ENCODE measurements at regions of chr12 and their contacts with region 1.

Region 1: DNA sequence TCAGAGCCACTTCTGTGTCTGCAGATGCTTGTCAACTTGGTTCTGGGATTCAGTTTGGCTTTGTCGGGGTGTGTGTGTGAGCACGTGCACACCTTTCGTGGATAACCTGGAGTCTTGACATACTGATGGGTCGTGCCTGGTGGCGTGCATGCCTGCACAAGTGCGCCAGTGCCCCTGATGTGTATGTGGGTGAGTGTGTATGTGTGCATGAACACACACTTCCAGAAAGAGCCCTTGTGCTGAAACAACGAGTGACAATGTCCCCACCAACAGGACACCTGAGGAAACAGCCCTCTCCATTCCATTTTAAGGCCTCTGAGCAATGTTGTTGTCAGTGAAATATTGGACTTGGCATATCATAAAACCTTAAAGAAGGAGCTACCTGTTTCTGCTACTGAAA is 53.9 kb downstream of the SMUG1 start:
- DNase-seq: no peak
- H3K4me3 ChIP-seq: no peak overlapping the region
- H3K27ac ChIP-seq: no peak overlapping the region
- H3K4me1 ChIP-seq: peaks cover 0 to 3% (median 1%) of the 10 kb centered on the region in 4 experiments; a peak in 2 of 7 replicates
- H3K27me3 ChIP-seq: peaks cover 25 to 89% (median 67%) of the 10 kb centered on the region in 4 experiments
- CTCF ChIP-seq: peak in 1 of 3 experiments; percentile 37; a peak in 1 of 4 replicates
- EP300 ChIP-seq: no peak
- POLR2A ChIP-seq: no peak
- RAD21 ChIP-seq: peak; percentile 31 to 50; a peak in 2 of 4 replicates

Region 2: GRCh38 chr12:54059668-54060067 is 75.2 kb before region 1 on chr12:
- CTCF ChIA-PET with region 1: interaction called, 10 read pairs
- POLR2A ChIA-PET with region 1: no interaction called
- DNase-seq: no peak
- H3K4me3 ChIP-seq: no peak overlapping the region
- H3K27ac ChIP-seq: no peak overlapping the region
- H3K4me1 ChIP-seq: peaks cover 4 to 14% (median 7%) of the 10 kb centered on the region in 4 experiments
- H3K27me3 ChIP-seq: peaks cover 83 to 98% (median 95%) of the 10 kb centered on the region in 4 experiments
- CTCF ChIP-seq: no peak
- EP300 ChIP-seq: no peak
- POLR2A ChIP-seq: no peak
- RAD21 ChIP-seq: no peak

Region 3: GRCh38 chr12:54147186-54147585 is 12.3 kb after region 1 on chr12:
- CTCF ChIA-PET with region 1: interaction called, 242 read pairs
- POLR2A ChIA-PET with region 1: interaction called, 3 read pairs
- DNase-seq: no peak
- H3K4me3 ChIP-seq: no peak overlapping the region
- H3K27ac ChIP-seq: no peak overlapping the region
- H3K4me1 ChIP-seq: peaks cover 0 to 4% (median 0%) of the 10 kb centered on the region in 4 experiments; a peak in 2 of 7 replicates
- H3K27me3 ChIP-seq: peaks cover 0 to 12% (median 3%) of the 10 kb centered on the region in 4 experiments; a peak in 3 of 7 replicates
- CTCF ChIP-seq: no peak
- EP300 ChIP-seq: no peak
- POLR2A ChIP-seq: no peak
- RAD21 ChIP-seq: no peak

Region 4: GRCh38 chr12:54164387-54165145 is 29.7 kb after region 1 on chr12:
- CTCF ChIA-PET with region 1: interaction called, 242 read pairs
- POLR2A ChIA-PET with region 1: interaction called, 4 read pairs
- DNase-seq: peak in 1 of 2 experiments; percentile 61
- H3K4me3 ChIP-seq: peak overlapping the region in 1 of 4 experiments; percentile 35; a peak in 3 of 8 replicates
- H3K27ac ChIP-seq: no peak overlapping the region
- H3K4me1 ChIP-seq: peaks cover 0 to 17% (median 12%) of the 10 kb centered on the region in 4 experiments; a peak in 6 of 7 replicates
- H3K27me3 ChIP-seq: peaks cover 0 to 9% (median 5%) of the 10 kb centered on the region in 4 experiments; a peak in 5 of 7 replicates
- CTCF ChIP-seq: no peak
- EP300 ChIP-seq: no peak
- POLR2A ChIP-seq: no peak
- RAD21 ChIP-seq: no peak

Region 5: GRCh38 chr12:54232790-54233189 is 97.9 kb after region 1 on chr12:
- CTCF ChIA-PET with region 1: no interaction called
- POLR2A ChIA-PET with region 1: no interaction called
- DNase-seq: no peak
- H3K4me3 ChIP-seq: no peak overlapping the region
- H3K27ac ChIP-seq: no peak overlapping the region
- H3K4me1 ChIP-seq: no peaks in the 10 kb centered on the region
- H3K27me3 ChIP-seq: no peaks in the 10 kb centered on the region
- CTCF ChIP-seq: peak in 1 of 3 experiments; percentile 48; a peak in 2 of 4 replicates
- EP300 ChIP-seq: no peak
- POLR2A ChIP-seq: no peak
- RAD21 ChIP-seq: no peak

Region 6: DNA sequence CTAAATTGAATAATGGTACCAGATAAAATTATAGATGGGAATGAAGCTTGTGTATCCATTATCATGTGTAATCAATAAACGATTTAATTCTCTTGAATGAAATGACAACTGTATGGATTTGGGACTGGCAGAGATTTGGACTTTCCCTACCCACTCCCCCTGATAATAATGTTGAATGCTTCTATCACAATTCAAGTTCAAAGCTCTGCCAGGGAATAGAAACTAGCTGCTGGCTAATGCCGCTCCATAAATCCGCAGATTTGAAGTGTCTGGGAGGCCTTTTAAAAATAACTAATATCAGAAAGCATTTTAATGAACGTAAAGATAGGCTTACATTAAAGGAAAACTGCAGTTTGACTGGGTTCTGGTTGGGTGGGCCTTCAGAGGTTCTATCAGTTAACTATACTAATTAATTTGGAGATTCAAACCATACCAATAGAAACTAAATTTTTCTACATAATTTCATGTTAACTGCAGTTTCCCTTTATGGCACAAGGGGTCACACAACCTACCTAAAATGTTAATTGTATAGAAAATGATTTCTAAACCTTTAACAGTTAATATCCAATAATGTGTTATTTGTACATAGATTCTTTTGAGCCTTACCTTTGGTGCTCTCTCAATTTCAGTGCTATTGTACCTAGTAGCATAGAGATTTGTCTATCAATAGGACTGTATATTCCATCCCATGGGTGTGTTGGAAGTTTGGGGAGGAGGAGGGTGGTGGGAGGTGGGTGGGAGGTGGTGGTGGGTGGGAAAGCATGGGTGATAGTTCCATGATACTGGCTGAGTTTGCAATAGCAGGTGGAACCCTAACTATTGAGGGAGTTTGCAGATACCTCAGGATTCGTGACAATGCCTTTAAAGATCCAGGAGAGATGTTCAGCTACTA is 150.5 kb after region 1 on chr12:
- CTCF ChIA-PET with region 1: no interaction called
- POLR2A ChIA-PET with region 1: no interaction called
- DNase-seq: no peak
- H3K4me3 ChIP-seq: peak overlapping the region in 1 of 4 experiments; percentile 33; a peak in 2 of 8 replicates
- H3K27ac ChIP-seq: no peak overlapping the region
- H3K4me1 ChIP-seq: peaks cover 0 to 7% (median 3%) of the 10 kb centered on the region in 4 experiments; a peak in 5 of 7 replicates
- H3K27me3 ChIP-seq: no peaks in the 10 kb centered on the region
- CTCF ChIP-seq: no peak
- EP300 ChIP-seq: no peak
- POLR2A ChIP-seq: no peak; a peak in 1 of 3 replicates
- RAD21 ChIP-seq: no peak

Region 7: GRCh38 chr12:54341378-54342300 is 206.8 kb after region 1 on chr12:
- CTCF ChIA-PET with region 1: no interaction called
- POLR2A ChIA-PET with region 1: no interaction called
- DNase-seq: no peak
- H3K4me3 ChIP-seq: no peak overlapping the region
- H3K27ac ChIP-seq: no peak overlapping the region
- H3K4me1 ChIP-seq: no peaks in the 10 kb centered on the region
- H3K27me3 ChIP-seq: no peaks in the 10 kb centered on the region
- CTCF ChIP-seq: no peak
- EP300 ChIP-seq: no peak
- POLR2A ChIP-seq: no peak
- RAD21 ChIP-seq: no peak